ENCODE measurements at regions of chr16 and their contacts with region 1.

Region 1: DNA sequence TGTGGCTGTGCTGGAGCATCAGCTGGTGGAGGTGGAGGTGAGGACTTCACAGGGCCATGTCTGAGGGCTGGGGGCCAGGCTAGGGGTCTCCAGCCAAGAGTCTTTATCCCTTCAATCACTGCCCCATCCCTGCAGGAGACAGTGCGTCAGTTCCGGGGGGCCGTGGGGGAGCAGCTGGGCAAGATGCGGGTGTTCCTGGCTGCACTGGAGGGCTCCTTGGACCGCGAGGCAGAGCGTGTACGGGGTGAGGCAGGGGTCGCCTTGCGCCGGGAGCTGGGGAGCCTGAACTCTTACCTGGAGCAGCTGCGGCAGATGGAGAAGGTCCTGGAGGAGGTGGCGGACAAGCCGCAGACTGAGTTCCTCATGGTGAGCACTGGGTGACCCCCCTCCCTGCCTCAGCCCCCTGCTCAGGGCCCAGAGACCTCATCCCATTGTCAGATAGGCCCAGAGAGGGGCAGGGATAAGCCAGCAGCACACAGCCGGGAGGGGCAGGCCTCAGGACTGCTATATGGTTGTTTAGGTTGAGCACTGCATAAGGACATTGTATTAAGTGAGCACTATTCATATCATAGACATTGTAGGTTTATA is 2.3 kb upstream of the PYDC1 start:
- DNase-seq: peak in 1 of 2 experiments; percentile 3
- H3K4me3 ChIP-seq: no peak overlapping the region
- H3K27ac ChIP-seq: no peak overlapping the region
- H3K4me1 ChIP-seq: peaks cover 6% of the 10 kb centered on the region
- H3K27me3 ChIP-seq: peaks cover 20% of the 10 kb centered on the region
- CTCF ChIP-seq: no peak

Region 2: DNA sequence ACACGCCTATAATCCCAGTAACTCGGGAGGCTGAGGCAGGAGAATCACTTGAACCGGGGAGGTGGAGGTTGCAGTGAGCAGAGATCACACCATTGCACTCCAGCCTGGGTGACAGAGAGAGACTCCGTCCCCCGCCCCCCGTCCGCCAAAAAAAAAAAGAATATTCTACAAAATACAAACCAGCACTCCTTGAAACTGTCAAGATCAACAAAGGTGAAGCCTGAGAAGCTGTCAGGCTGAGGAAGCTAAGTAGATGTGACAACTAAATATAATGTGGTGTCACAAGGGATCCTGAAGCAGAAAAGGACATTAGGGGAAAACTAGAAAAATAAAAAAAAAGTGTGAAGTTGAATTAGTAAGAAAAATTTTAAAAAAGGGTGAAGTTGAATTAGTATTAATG is 870.3 kb before region 1 on chr16:
- CTCF ChIA-PET with region 1: no interaction called
- POLR2A ChIA-PET with region 1: interaction called, 21 read pairs
- intact Hi-C with region 1: no loop called
- DNase-seq: no peak
- H3K4me3 ChIP-seq: no peak overlapping the region
- H3K27ac ChIP-seq: no peak overlapping the region
- H3K4me1 ChIP-seq: peaks cover 3% of the 10 kb centered on the region
- H3K27me3 ChIP-seq: no peaks in the 10 kb centered on the region
- CTCF ChIP-seq: no peak

Region 3: GRCh38 chr16:31142109-31143010 is 76.9 kb before region 1 on chr16:
- CTCF ChIA-PET with region 1: no interaction called
- POLR2A ChIA-PET with region 1: no interaction called
- intact Hi-C with region 1: no loop called
- DNase-seq: peak; percentile 95 to 100
- H3K4me3 ChIP-seq: peak overlapping the region; percentile 52
- H3K27ac ChIP-seq: peak overlapping the region; percentile 69
- H3K4me1 ChIP-seq: peaks cover 39% of the 10 kb centered on the region
- H3K27me3 ChIP-seq: no peaks in the 10 kb centered on the region
- CTCF ChIP-seq: peak; percentile 93

Region 4: GRCh38 chr16:31325171-31325570 is 105.9 kb after region 1 on chr16:
- CTCF ChIA-PET with region 1: no interaction called
- POLR2A ChIA-PET with region 1: no interaction called
- intact Hi-C with region 1: no loop called
- DNase-seq: no peak
- H3K4me3 ChIP-seq: no peak overlapping the region
- H3K27ac ChIP-seq: no peak overlapping the region
- H3K4me1 ChIP-seq: no peaks in the 10 kb centered on the region
- H3K27me3 ChIP-seq: peaks cover 9% of the 10 kb centered on the region; the same call in 1 of the 2 replicates
- CTCF ChIP-seq: no peak

Region 5: DNA sequence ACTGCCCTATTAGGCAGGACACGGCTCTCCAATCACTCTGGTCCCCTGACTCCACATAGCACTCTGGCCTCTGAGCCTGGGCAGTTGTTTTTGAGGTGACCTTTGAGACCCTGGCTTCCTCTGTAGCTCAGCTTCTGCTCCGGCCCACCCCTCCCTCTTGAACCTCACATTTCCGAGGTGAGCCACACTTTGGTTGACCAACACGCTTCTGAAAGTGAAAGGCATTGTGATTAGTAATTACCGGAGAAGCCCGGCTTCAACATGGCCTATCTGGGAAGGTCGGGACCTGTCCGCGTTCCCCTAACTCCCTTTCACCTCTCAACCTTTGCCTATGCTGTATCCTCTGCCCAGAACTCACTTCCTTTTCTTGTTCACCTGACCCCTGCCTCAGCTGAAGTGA is 125.5 kb after region 1 on chr16:
- CTCF ChIA-PET with region 1: no interaction called
- POLR2A ChIA-PET with region 1: no interaction called
- intact Hi-C with region 1: no loop called
- DNase-seq: no peak
- H3K4me3 ChIP-seq: no peak overlapping the region
- H3K27ac ChIP-seq: no peak overlapping the region
- H3K4me1 ChIP-seq: no peaks in the 10 kb centered on the region
- H3K27me3 ChIP-seq: peaks cover 44% of the 10 kb centered on the region
- CTCF ChIP-seq: no peak